PC-3 (cell line): ENCODE measurements at regions of chr1 and their contacts with region 1.

Region 1: DNA sequence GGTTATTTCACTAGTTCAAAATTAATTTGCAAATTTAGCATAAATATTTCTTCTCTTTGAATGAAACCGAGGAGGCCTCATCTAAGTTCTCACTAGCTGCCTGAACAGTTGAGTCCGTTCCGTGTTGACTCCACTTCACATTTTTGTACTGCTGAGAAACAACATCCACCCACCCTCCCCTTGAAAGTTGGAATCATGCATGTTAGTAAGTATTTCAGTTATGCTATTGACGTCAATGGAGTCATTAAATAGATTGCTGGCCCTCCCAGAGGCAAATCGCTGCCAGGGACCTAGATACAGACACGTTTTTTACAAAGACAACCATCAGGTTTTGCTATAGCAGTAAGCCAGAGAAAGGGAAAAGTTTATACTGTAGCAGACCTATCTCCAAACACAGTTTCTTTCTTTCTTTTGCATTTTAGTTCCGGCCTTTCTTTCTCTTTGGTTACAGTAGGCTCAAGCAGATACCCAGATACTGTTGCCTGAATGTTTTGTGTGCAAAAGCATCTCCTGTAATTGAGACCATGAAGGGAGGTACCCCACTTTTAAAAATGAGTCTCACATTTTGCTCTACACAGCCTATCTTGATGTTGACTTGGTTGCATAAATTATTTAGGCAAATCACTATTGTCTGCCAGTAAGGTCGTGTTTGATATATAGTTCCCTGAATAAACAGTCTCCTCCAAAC is 262.6 kb upstream of the SGIP1 start:
- DNase-seq: peak; percentile 94
- ATAC-seq: peak; percentile 72
- H3K4me3 ChIP-seq: peak overlapping the region; percentile 24; the same call in 1 of the 2 replicates
- H3K27ac ChIP-seq: peak overlapping the region; percentile 99
- H3K4me1 ChIP-seq: peaks cover 38% of the 10 kb centered on the region
- H3K27me3 ChIP-seq: no peaks in the 10 kb centered on the region
- CTCF ChIP-seq: no peak

Region 2: GRCh38 chr1:66090859-66091457 is 180.4 kb before region 1 on chr1:
- CTCF ChIA-PET with region 1: no interaction called
- POLR2A ChIA-PET with region 1: no interaction called
- intact Hi-C with region 1: no loop called
- DNase-seq: no peak
- ATAC-seq: no peak
- H3K4me3 ChIP-seq: no peak overlapping the region
- H3K27ac ChIP-seq: no peak overlapping the region
- H3K4me1 ChIP-seq: no peaks in the 10 kb centered on the region
- H3K27me3 ChIP-seq: peaks cover 50% of the 10 kb centered on the region
- CTCF ChIP-seq: no peak

Region 3: GRCh38 chr1:66285618-66286270 is 14.4 kb after region 1 on chr1:
- CTCF ChIA-PET with region 1: no interaction called
- POLR2A ChIA-PET with region 1: no interaction called
- intact Hi-C with region 1: loop called (anchors 1 kb)
- DNase-seq: peak; percentile 83
- ATAC-seq: peak; percentile 71
- H3K4me3 ChIP-seq: no peak overlapping the region
- H3K27ac ChIP-seq: peak overlapping the region; percentile 96
- H3K4me1 ChIP-seq: peaks cover 64% of the 10 kb centered on the region
- H3K27me3 ChIP-seq: no peaks in the 10 kb centered on the region
- CTCF ChIP-seq: no peak

Region 4: DNA sequence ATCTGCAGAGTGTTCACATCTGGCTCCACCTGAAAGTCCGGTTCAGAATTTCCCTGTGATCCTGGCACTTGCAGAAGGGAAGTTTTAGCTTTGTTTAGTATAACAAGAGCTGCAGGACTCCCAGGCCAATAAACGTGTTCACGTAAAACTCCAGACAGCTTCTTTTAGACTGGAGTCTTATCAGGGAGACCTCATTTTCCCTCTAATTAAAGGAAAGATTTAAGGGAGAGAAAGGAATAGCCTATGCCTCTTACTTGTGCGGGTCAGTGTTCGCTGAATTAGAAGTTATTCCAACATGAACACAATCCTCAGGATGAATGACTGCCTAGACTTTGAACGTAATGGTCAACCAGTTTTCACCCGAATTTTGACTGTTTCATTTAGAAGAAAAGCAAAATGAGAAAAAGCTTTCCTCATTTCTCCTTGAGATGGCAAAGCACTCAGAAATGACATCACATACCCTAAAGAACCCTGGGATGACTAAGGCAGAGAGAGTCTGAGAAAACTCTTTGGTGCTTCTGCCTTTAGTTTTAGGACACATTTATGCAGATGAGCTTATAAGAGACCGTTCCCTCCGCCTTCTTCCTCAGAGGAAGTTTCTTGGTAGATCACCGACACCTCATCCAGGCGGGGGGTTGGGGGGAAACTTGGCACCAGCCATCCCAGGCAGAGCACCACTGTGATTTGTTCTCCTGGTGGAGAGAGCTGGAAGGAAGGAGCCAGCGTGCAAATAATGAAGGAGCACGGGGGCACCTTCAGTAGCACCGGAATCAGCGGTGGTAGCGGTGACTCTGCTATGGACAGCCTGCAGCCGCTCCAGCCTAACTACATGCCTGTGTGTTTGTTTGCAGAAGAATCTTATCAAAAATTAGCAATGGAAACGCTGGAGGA is 60.5 kb after region 1 on chr1:
- CTCF ChIA-PET with region 1: no interaction called
- POLR2A ChIA-PET with region 1: interaction called, 10 read pairs
- intact Hi-C with region 1: loop called (anchors 1 kb)
- DNase-seq: peak; percentile 69
- ATAC-seq: peak; percentile 91
- H3K4me3 ChIP-seq: peak overlapping the region; percentile 66
- H3K27ac ChIP-seq: peak overlapping the region; percentile 86
- H3K4me1 ChIP-seq: peaks cover 26% of the 10 kb centered on the region
- H3K27me3 ChIP-seq: no peaks in the 10 kb centered on the region
- CTCF ChIP-seq: peak; percentile 20; the same call in 1 of the 2 replicates

Region 5: GRCh38 chr1:66350001-66350547 is 78.7 kb after region 1 on chr1:
- CTCF ChIA-PET with region 1: no interaction called
- POLR2A ChIA-PET with region 1: no interaction called
- intact Hi-C with region 1: loop called (anchors 5 kb)
- DNase-seq: peak; percentile 81
- ATAC-seq: peak; percentile 77
- H3K4me3 ChIP-seq: 0 out of 2 replicates have a peak overlapping the region, but pooled peaks have one; percentile 25
- H3K27ac ChIP-seq: peak overlapping the region; percentile 70
- H3K4me1 ChIP-seq: peaks cover 32% of the 10 kb centered on the region
- H3K27me3 ChIP-seq: no peaks in the 10 kb centered on the region
- CTCF ChIP-seq: no peak

Region 6: GRCh38 chr1:66436378-66437145 is 165.2 kb after region 1 on chr1:
- CTCF ChIA-PET with region 1: no interaction called
- POLR2A ChIA-PET with region 1: no interaction called
- intact Hi-C with region 1: loop called (anchors 5 kb)
- DNase-seq: peak; percentile 87
- ATAC-seq: peak; percentile 94
- H3K4me3 ChIP-seq: no peak overlapping the region
- H3K27ac ChIP-seq: peak overlapping the region; percentile 48
- H3K4me1 ChIP-seq: peaks cover 34% of the 10 kb centered on the region
- H3K27me3 ChIP-seq: no peaks in the 10 kb centered on the region
- CTCF ChIP-seq: peak; percentile 73